Activated CD4-positive, alpha-beta T cell treated with anti-CD3 and anti-CD28 coated beads, Interleukin-2, amount 10 ng/mL, durations not matched to agents 24 days and 14 days (primary cell): ENCODE measurements at regions of chr6 and their contacts with region 1.

Region 1: DNA sequence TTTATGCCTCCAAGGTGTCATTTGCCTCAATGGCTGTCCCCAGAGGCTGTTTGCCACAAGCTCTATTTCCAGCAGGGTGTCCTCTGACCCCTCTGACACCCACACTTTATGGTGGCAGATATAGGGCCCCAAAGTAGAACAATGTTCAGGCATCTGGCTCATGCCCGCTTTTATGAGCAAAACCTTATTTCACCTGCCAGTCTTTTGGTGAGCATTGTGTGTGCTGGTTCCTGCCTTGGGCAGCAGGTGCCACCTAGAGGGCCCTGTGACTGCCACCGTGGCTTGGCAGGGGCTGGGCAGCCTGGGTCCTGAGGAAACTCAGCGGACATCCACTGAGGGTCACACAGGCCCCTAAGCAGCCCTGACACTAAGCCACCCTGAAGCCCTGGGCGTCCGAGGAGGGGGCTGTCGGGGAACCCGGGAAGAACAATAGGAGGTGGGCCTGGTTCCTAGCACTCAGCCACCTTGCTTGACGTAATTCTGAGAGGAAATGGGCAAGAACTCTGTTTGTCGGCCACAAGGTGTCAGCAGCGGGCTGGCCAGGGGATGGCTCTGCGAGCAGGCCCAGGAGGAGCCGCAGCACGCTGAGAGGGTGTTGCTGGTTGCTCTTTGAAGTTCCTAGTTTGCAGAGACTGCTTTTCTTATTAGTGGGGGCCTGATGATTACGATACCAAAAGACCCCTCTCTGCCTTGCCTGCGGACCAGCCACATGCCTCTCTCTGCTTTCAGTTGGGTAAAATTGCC is 148.9 kb downstream of the SCML4 start:
- DNase-seq: peak; percentile 95
- H3K4me3 Mint-ChIP-seq: no peak overlapping the region
- H3K27ac Mint-ChIP-seq: peak overlapping the region; percentile 45
- H3K4me1 Mint-ChIP-seq: peaks cover 19% of the 10 kb centered on the region
- H3K27me3 Mint-ChIP-seq: peaks cover 11% of the 10 kb centered on the region

Region 2: GRCh38 chr6:107318100-107318736 is 356.9 kb before region 1 on chr6:
- intact Hi-C with region 1: loop called (anchors 1 kb)
- DNase-seq: peak; percentile 72
- H3K4me3 Mint-ChIP-seq: no peak overlapping the region
- H3K27ac Mint-ChIP-seq: no peak overlapping the region
- H3K4me1 Mint-ChIP-seq: peaks cover 10% of the 10 kb centered on the region
- H3K27me3 Mint-ChIP-seq: no peaks in the 10 kb centered on the region

Region 3: DNA sequence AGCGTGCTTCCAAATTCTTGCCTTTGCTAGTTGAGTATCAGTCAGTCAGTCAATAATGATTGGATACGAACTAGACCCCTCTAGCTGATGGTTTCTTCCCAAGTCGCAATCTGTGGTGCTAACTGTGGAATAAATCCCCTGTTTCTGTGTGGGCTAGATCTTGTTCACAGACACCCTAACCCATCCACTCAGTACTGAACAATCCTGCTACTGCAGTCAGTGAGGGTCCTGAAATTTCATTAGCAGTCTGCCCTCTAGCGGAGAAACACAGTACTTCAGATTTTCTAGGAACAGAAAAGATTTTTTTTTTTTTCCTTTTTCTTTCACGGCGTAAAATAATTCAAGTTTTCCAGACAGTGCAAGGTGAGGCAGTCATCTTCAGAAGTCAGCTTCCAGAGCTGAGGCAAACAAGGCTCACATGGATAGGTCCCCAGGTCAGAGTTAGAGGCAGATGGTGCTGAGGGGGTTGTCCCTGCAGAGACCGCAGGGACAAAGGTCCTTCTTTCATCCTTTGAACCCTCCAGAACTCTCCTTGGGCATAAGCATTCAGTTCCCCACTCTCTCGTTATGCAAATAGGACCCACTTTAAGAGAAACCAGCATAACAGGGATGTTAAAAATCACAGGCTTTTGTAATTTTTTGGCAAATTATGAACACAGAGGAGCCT is 29.3 kb after region 1 on chr6:
- intact Hi-C with region 1: loop called (anchors 1 kb)
- DNase-seq: peak; percentile 74
- H3K4me3 Mint-ChIP-seq: no peak overlapping the region
- H3K27ac Mint-ChIP-seq: no peak overlapping the region
- H3K4me1 Mint-ChIP-seq: peaks cover 6% of the 10 kb centered on the region
- H3K27me3 Mint-ChIP-seq: no peaks in the 10 kb centered on the region

Region 4: DNA sequence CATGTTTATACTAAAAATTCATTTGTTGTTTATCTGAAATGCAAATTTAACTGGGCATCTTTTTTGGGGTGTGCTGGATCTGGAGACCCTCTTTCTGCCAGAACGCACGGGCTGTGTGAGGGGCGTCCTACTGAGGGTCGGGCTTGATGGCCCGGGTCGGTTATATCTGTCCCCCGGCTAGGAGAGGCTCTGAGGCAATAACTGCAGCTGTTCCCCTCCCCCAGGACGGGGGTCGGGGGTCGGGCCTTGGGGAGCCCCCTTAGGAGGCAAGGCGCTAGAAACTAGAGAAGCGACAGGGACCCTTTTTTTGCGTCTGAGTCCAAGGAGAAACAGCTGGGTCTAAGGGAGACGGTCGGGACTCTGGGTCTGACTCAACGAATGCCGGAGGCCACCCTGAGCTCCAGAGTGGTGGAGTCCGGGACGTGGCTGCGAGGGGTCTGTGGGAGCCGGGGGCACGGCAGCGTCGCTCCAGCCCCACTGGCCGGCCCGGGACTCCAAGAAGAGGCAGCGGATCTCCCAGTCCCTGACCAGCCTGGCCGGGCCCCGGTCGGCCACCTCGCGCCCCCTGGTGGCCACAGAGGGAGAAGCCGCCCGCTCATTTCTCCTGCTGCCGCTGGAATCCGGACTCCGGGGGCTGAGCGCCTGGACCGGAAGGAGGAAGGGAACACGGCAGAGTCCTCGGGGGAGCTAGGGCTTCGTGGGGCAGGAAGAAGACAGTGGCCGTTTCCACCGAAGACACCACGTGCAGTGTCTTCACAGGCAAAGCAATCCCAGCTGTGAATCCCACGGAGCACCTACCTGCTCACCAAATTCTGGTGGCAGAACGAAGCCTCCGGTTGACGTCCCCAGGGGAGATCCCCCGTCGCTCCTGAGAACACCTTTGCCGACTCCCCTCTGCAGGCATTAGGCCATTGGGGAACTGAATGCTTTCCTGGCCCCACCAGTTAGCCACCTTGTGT is 173.0 kb after region 1 on chr6:
- intact Hi-C with region 1: loop called (anchors 1 kb)
- DNase-seq: peak; percentile 95
- H3K4me3 Mint-ChIP-seq: peak overlapping the region; percentile 80
- H3K27ac Mint-ChIP-seq: peak overlapping the region; percentile 54
- H3K4me1 Mint-ChIP-seq: peaks cover 21% of the 10 kb centered on the region
- H3K27me3 Mint-ChIP-seq: peaks cover 6% of the 10 kb centered on the region

Region 5: DNA sequence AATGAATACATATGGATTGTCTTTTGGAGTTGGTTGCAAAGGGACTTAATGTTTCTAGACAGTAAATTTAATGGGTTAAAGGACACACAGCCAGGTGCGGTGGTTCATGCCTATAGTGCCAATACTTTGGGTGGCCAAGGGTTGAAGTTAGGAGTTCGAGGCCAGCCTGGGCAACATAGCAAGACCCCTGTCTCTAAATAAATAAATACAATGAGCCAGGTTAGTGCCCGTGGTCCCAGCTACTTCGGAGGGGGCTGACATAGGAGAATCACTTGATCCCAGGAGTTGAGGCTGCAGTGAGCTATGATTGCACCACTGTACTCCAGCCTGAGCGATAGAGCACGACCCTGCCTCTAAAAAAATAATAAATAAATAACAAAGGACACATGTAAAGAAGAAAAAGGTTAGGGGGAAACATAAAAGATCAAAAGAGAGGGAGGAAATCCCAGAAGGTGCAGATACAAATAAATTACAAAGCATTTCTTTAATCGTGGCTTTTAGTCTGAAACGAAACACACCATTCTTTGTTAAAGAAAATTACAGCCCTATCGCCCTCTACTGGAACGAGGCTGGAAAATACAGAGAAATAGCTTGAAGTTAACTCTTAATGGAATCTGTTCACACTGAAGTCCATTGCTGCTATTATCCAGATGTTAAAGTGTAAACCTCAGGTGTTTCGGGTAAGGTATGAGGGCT is 191.6 kb after region 1 on chr6:
- intact Hi-C with region 1: loop called (anchors 1 kb)
- DNase-seq: peak; percentile 81
- H3K4me3 Mint-ChIP-seq: no peak overlapping the region
- H3K27ac Mint-ChIP-seq: no peak overlapping the region
- H3K4me1 Mint-ChIP-seq: peaks cover 16% of the 10 kb centered on the region
- H3K27me3 Mint-ChIP-seq: peaks cover 4% of the 10 kb centered on the region

Region 6: DNA sequence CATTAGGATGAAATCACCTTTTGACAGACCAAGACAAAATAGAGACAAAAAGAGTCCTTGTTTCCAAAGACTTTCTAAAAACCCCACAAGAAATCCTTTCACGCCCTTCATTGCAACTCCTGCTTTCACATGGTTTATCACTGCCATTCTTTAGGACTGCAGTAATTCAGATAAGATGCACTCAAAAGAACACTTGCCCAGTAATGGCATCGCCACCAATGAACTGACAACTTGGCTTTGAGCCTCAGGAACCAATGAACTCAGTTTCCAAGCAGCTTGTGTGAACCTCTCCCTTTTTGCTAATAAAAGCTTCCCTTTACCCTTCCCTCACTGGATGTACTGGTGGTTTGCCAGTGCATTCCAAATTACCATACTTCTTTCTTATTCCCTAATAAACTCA is 377.5 kb after region 1 on chr6:
- intact Hi-C with region 1: loop called (anchors 1 kb)
- DNase-seq: no peak
- H3K4me3 Mint-ChIP-seq: no peak overlapping the region
- H3K27ac Mint-ChIP-seq: no peak overlapping the region
- H3K4me1 Mint-ChIP-seq: no peaks in the 10 kb centered on the region
- H3K27me3 Mint-ChIP-seq: no peaks in the 10 kb centered on the region